ENCODE measurements at regions of chr9 and their contacts with region 1.

Region 1: DNA sequence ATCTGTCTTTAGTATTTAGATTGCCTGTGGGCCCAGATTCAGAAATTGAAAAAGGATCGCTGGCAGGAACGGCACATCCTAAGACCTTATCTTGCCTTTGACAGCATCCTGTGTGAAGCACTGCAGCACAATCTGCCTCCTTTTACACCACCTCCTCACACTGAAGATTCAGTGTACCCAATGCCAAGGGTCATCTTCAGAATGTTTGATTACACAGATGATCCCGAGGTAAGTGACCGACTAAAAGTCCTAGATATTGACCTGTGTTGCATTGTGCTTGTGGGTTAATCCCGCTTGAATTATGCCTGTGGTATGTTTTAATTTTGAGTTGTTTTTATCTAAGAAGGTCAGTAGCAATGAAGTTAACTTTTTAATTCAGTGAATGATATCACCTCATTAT is 14.4 kb downstream of the NCBP1 start:
- DNase-seq: no peak

Region 2: DNA sequence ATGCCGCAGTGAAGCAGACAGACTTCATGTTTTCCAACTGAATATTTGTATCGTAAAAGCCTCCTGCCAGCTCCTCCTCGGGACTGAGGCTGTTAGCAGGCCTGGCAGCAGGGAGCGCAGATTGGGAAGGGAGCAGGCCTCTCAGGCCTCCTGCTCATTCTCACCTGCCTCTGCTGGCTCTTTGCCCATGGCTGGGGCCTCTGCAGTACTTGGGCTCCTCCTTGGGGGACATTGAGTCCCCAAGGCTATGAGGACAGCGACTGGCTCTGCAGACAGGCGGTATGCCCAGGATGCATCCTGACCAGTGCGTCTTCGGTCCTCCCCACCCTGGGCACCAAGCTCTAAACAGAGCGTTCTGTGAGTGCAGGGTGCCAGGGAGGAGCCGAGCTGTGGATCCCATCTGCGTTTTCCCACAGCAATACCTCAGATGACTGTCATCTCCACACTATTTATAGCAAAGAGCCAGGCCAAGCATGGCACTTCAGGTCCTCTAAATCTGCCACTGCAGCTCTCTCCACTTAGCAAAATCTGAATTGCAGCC is 53.5 kb before region 1 on chr9:
- intact Hi-C with region 1: no loop called
- DNase-seq: no peak

Region 3: DNA sequence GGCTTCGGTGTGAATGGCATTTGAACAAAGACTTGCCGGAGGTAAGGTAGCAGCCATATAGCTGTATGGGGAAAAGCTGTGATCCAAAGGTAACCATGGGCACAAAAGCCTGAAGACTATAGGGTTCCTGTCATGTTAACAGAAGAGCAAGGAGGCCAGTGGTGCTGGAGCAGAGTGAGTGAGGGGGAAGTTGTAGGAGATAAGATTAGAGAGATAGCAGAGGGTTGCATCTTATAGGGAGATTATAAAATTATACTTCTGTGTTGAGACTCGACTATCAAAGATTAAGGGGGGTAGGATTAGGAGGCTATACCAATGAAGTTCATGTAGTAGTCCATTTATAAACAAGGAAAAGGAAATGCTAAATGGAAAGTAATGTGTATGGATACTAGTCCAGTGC is 11.1 kb before region 1 on chr9:
- intact Hi-C with region 1: loop called in 1 of 2 experiments (anchors 1 kb)
- DNase-seq: no peak

Region 4: DNA sequence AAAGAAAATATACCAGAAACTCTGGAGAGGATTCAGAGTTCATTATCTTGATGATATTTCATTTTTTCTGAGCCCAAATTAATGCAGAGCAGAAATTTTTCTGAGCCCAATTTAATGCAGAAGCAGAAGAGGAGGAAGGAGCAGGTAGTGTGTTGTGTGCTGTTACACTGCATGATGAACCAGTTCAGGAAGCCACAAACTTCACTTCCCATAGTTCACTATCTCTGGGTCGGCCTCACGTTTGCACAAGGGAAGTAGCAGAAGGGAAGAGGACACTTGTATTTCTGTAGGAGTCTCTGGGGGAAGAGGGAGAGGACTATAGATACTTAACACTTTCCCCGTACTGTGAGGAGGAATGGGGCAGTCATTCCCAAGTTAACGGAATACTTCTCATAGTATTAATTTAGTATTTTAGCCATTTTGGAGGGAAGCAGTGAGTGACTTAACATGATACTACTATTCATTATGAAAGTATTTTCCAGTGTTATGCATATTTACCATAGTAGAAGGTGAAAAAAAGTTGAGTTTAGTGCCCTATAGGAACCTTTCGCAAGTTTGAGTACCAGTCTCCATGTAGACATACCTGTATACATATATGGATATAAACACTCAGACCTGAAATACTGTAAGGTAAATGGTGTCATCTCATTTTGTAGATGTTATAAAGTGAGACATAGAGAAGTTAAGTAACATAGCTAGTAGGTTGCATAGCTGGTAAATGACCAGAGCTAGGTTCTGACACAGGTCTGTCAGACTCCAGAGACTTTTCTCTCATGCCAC is 19.1 kb after region 1 on chr9:
- intact Hi-C with region 1: no loop called
- DNase-seq: no peak

Region 5: DNA sequence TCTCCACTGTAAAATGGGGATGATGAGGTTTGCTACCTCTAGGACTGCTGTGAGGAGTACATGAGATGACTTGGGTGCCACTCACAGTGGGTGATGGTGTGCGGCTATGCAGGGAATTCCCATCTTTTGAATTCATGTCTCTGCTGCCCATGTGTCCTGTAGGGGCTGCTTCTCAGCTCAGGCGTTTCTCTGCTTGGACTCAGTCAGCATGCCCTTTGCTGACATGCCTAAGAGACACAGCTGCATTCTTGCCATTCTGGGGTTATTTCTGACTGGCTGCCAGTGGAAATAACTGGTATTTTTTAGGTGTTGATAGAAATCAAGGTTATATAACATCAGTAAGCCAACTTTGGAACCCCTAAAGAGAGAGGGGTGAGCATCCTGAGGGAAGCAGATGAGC is 73.4 kb after region 1 on chr9:
- intact Hi-C with region 1: no loop called
- DNase-seq: no peak